Mammary epithelial cell (primary cell): ENCODE measurements at regions of chr20 and their contacts with region 1.

Region 1: GRCh38 chr20:60727408-60727807 is 524.7 kb upstream of the CDH4 start:
- DNase-seq: peak; percentile 11
- H3K4me3 ChIP-seq: no peak overlapping the region
- H3K27ac ChIP-seq: no peak overlapping the region
- H3K4me1 ChIP-seq: no peaks in the 10 kb centered on the region
- H3K27me3 ChIP-seq: peaks cover 2% of the 10 kb centered on the region
- CTCF ChIP-seq: no peak

Region 2: GRCh38 chr20:60669211-60669610 is 58.2 kb before region 1 on chr20:
- CTCF ChIA-PET with region 1: no interaction called
- dilution Hi-C with region 1: loop called (anchors 5 kb)
- in situ Hi-C with region 1: no loop called
- intact Hi-C with region 1: no loop called
- DNase-seq: no peak
- H3K4me3 ChIP-seq: no peak overlapping the region
- H3K27ac ChIP-seq: no peak overlapping the region
- H3K4me1 ChIP-seq: no peaks in the 10 kb centered on the region
- H3K27me3 ChIP-seq: peaks cover 4% of the 10 kb centered on the region
- CTCF ChIP-seq: no peak

Region 3: DNA sequence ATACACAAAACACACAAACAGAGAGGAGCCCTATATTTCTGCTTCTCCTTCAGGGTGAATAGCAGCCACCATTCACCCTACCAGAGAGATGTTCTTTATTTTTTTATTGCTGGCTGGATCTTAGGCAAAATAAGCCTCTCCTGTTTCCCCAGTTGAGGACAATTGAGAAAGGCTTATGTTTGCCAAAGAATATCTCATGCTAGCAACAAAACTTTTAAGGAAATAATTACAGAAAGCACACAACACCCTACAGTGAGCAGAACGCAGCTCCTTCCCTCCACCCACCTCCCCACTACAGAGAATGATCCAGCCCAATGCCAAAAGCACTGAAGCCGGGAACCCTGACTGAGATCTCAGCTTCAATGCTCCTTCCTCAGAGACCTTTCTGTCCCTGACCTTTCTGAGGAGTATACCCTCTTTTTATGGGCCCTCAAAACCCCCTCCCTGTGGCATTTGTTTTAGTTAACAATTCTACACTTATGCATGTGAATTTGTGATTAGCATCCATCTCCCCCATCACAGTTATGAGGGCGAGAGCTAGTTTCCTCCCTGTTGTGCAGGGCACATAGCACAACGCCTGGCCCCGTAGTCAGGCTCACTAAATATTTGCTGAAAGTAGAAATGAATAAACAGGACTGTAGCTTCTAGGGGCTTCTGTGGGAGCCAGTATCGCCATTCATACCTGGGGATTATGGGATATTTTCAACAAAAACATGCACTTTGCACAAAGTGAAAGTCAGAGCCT is 33.0 kb after region 1 on chr20:
- CTCF ChIA-PET with region 1: no interaction called
- dilution Hi-C with region 1: loop called (anchors 5 kb)
- in situ Hi-C with region 1: no loop called
- intact Hi-C with region 1: no loop called
- DNase-seq: no peak
- H3K4me3 ChIP-seq: peak overlapping the region in 2 of 3 experiments; percentile 28 to 49
- H3K27ac ChIP-seq: no peak overlapping the region
- H3K4me1 ChIP-seq: no peaks in the 10 kb centered on the region
- H3K27me3 ChIP-seq: peaks cover 3% of the 10 kb centered on the region
- CTCF ChIP-seq: no peak

Region 4: GRCh38 chr20:60794674-60795073 is 67.3 kb after region 1 on chr20:
- CTCF ChIA-PET with region 1: no interaction called
- dilution Hi-C with region 1: no loop called
- in situ Hi-C with region 1: no loop called
- intact Hi-C with region 1: no loop called
- DNase-seq: no peak
- H3K4me3 ChIP-seq: no peak overlapping the region
- H3K27ac ChIP-seq: no peak overlapping the region
- H3K4me1 ChIP-seq: no peaks in the 10 kb centered on the region
- H3K27me3 ChIP-seq: peaks cover 9% of the 10 kb centered on the region
- CTCF ChIP-seq: no peak